Naive thymus-derived CD4-positive, alpha-beta T cell (primary cell): ENCODE measurements at regions of chr12 and their contacts with region 1.

Region 1: GRCh38 chr12:100741084-100741711 is 53.4 kb upstream of the ANO4 start:
- DNase-seq: peak in 1 of 9 donors; percentile 8
- ATAC-seq: no peak
- H3K4me3 ChIP-seq: no peak overlapping the region
- H3K4me3 Mint-ChIP-seq: no peak overlapping the region
- H3K27ac ChIP-seq: no peak overlapping the region
- H3K27ac Mint-ChIP-seq: no peak overlapping the region
- H3K4me1 ChIP-seq: no peaks in the 10 kb centered on the region
- H3K4me1 Mint-ChIP-seq: no peaks in the 10 kb centered on the region
- H3K27me3 ChIP-seq: no peaks in the 10 kb centered on the region
- H3K27me3 Mint-ChIP-seq: peaks cover 0 to 20% (median 9%) of the 10 kb centered on the region in 5 donors

Region 2: GRCh38 chr12:100668945-100669536 is 72.2 kb before region 1 on chr12:
- CTCF ChIA-PET with region 1: no interaction called
- POLR2A ChIA-PET with region 1: no interaction called
- intact Hi-C with region 1: loop called in 1 of 2 experiments (anchors 2 kb)
- DNase-seq: peak in 4 of 9 donors; percentile 2 to 54 (median 12)
- ATAC-seq: peak; percentile 57
- H3K4me3 ChIP-seq: no peak overlapping the region
- H3K4me3 Mint-ChIP-seq: no peak overlapping the region
- H3K27ac ChIP-seq: no peak overlapping the region
- H3K27ac Mint-ChIP-seq: no peak overlapping the region
- H3K4me1 ChIP-seq: no peaks in the 10 kb centered on the region
- H3K4me1 Mint-ChIP-seq: peaks cover 0 to 2% (median 0%) of the 10 kb centered on the region in 7 donors
- H3K27me3 ChIP-seq: no peaks in the 10 kb centered on the region
- H3K27me3 Mint-ChIP-seq: peaks cover 0 to 18% (median 10%) of the 10 kb centered on the region in 5 donors